ENCODE measurements at regions of chr17 and their contacts with region 1.

Region 1: GRCh38 chr17:11935734-11936406 is 61.4 kb downstream of the ZNF18 start:
- DNase-seq: peak in 1 of 2 experiments; percentile 72
- ATAC-seq: peak; percentile 49 to 65; a peak in 3 of 6 replicates
- H3K4me3 ChIP-seq: no peak overlapping the region
- H3K27ac ChIP-seq: no peak overlapping the region
- H3K4me1 ChIP-seq: no peaks in the 10 kb centered on the region
- CTCF ChIP-seq: peak; percentile 94
- EP300 ChIP-seq: no peak
- POLR2A ChIP-seq: no peak
- RAD21 ChIP-seq: peak; percentile 84 to 95

Region 2: GRCh38 chr17:11925262-11926021 is 10.4 kb before region 1 on chr17:
- CTCF ChIA-PET with region 1: interaction called, 39 read pairs
- POLR2A ChIA-PET with region 1: no interaction called
- DNase-seq: no peak
- ATAC-seq: no peak; a peak in 1 of 6 replicates
- H3K4me3 ChIP-seq: no peak overlapping the region
- H3K27ac ChIP-seq: no peak overlapping the region
- H3K4me1 ChIP-seq: peaks cover 3% of the 10 kb centered on the region; the same call in 1 of the 3 replicates
- CTCF ChIP-seq: no peak
- EP300 ChIP-seq: no peak
- POLR2A ChIP-seq: no peak
- RAD21 ChIP-seq: no peak

Region 3: GRCh38 chr17:11948789-11949188 is 12.9 kb after region 1 on chr17:
- CTCF ChIA-PET with region 1: interaction called, 23 read pairs
- POLR2A ChIA-PET with region 1: no interaction called
- DNase-seq: peak in 1 of 2 experiments; percentile 22
- ATAC-seq: peak; percentile 64 to 73
- H3K4me3 ChIP-seq: no peak overlapping the region
- H3K27ac ChIP-seq: no peak overlapping the region
- H3K4me1 ChIP-seq: peaks cover 6% of the 10 kb centered on the region; the same call in 1 of the 3 replicates
- CTCF ChIP-seq: no peak
- EP300 ChIP-seq: no peak
- POLR2A ChIP-seq: no peak
- RAD21 ChIP-seq: no peak

Region 4: DNA sequence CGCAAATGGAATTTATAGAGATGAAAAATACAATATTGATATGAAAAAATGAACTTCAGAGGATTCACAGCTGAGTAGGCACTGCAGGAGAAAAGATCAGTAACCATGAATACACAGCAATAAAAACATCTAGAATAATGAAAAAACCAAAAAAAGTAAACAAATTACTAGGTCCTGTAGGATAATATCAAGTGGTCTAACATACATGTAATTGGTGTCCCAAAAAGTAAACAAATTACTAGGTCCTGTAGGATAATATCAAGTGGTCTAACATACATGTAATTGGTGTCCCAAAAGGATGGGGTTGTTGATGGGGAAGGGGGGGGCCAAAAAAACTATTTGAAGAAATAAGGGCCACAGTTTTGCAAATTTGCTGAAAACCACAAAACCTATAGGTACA is 18.1 kb after region 1 on chr17:
- CTCF ChIA-PET with region 1: interaction called, 15 read pairs
- POLR2A ChIA-PET with region 1: no interaction called
- DNase-seq: peak in 1 of 2 experiments; percentile 9
- ATAC-seq: no peak
- H3K4me3 ChIP-seq: no peak overlapping the region
- H3K27ac ChIP-seq: no peak overlapping the region
- H3K4me1 ChIP-seq: no peaks in the 10 kb centered on the region
- CTCF ChIP-seq: no peak
- EP300 ChIP-seq: no peak
- POLR2A ChIP-seq: no peak
- RAD21 ChIP-seq: no peak

Region 5: DNA sequence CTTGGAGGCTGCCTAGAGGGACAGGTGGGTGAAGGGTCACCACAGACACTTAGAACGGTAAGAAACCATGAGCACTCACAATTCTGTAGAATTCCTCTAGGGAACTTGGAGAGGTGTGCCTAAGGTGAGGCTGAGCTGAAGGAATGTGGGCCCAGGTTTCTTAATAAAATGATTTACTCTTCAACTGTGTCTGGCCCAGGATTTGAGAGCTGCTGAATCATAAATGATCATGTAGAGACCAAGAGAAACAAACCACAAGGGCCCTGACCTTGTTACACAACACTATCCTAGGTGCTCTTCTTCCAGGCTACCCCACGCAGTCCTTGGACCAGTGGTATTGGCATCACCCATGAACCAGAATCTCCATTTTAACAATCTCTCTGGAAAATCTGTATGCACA is 33.7 kb after region 1 on chr17:
- CTCF ChIA-PET with region 1: interaction called, 12 read pairs
- POLR2A ChIA-PET with region 1: no interaction called
- DNase-seq: no peak
- ATAC-seq: no peak
- H3K4me3 ChIP-seq: no peak overlapping the region
- H3K27ac ChIP-seq: no peak overlapping the region
- H3K4me1 ChIP-seq: no peaks in the 10 kb centered on the region
- CTCF ChIP-seq: no peak
- EP300 ChIP-seq: no peak
- POLR2A ChIP-seq: no peak
- RAD21 ChIP-seq: no peak

Measured in A549 (cell line).